Naive thymus-derived CD8-positive, alpha-beta T cell (primary cell): ENCODE measurements at regions of chr1 and their contacts with region 1.

Region 1: GRCh38 chr1:94854458-94855306 is 34.5 kb downstream of the SLC44A3 start:
- DNase-seq: peak; percentile 52 to 90 (median 74)
- ATAC-seq: peak; percentile 95 to 98
- H3K4me3 Mint-ChIP-seq: no peak overlapping the region
- H3K27ac Mint-ChIP-seq: no peak overlapping the region
- H3K4me1 Mint-ChIP-seq: no peaks in the 10 kb centered on the region
- H3K27me3 Mint-ChIP-seq: peaks cover 0 to 7% (median 5%) of the 10 kb centered on the region in 5 donors

Region 2: GRCh38 chr1:94832446-94832845 is 22.2 kb before region 1 on chr1:
- POLR2A ChIA-PET with region 1: no interaction called
- DNase-seq: no peak
- ATAC-seq: no peak
- H3K4me3 Mint-ChIP-seq: no peak overlapping the region
- H3K27ac Mint-ChIP-seq: no peak overlapping the region
- H3K4me1 Mint-ChIP-seq: no peaks in the 10 kb centered on the region
- H3K27me3 Mint-ChIP-seq: peaks cover 6 to 27% (median 13%) of the 10 kb centered on the region in 5 donors

Region 3: DNA sequence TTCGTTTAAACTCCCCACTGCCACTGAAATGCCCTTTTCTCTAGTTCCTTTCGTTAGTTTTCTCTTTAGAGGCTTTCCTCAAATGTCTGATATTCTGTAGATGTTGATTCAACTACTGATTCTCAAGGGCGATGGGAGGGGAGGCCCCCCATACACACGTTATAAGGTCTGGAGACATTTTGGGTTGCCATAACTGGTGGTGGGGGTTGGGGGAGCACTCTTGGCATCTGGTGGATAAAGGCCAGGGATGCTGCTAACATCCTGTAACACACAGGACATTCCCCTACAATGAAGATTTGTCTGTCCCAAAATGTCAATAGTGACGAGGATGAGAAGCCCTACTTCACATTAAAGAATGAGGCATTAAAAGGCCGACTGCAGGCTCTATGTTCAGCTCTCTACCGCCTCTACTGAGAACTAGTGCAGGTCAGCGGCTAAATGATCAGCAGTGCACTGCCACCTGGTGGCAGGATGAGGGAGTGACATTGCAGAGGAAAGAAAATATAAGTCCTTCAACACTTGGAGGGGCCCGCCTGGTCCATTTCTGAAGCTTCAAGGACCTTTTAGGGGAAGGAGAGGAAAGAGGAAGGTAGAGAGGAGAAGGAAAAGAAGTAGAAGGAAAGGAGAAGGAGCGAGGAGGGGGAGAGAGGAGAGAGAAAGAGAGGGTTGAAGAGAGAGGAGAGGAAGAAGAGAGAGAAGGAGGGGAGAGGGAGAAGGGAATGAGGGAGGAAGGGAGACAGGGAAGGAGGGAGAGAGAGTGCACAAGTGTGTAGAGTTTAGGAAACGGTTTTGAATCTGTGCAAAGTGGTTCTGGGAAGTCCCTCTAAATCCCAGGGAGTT is 188.7 kb after region 1 on chr1:
- POLR2A ChIA-PET with region 1: interaction called, 17 read pairs
- DNase-seq: peak; percentile 58 to 89 (median 73)
- ATAC-seq: peak; percentile 96 to 98
- H3K4me3 Mint-ChIP-seq: no peak overlapping the region
- H3K27ac Mint-ChIP-seq: no peak overlapping the region
- H3K4me1 Mint-ChIP-seq: no peaks in the 10 kb centered on the region
- H3K27me3 Mint-ChIP-seq: no peaks in the 10 kb centered on the region

Region 4: GRCh38 chr1:95233737-95234500 is 379.2 kb after region 1 on chr1 and contains the start of gene RWDD3:
- POLR2A ChIA-PET with region 1: interaction called, 12 read pairs
- DNase-seq: peak; percentile 87 to 94 (median 92)
- ATAC-seq: peak; percentile 93 to 95
- H3K4me3 Mint-ChIP-seq: peak within 1 kb of the TSS; percentile 84 to 94 (median 91)
- H3K27ac Mint-ChIP-seq: peak within 1 kb of the TSS; percentile 87 to 96 (median 94)
- H3K4me1 Mint-ChIP-seq: peaks cover 19 to 53% (median 43%) of the 10 kb centered on the region in 4 donors
- H3K27me3 Mint-ChIP-seq: peaks cover 3 to 27% (median 5%) of the 10 kb centered on the region in 5 donors
- polyA plus RNA-seq, gene RWDD3: 33.8 to 54.0 (median 48.2) TPM